ENCODE measurements at regions of chr7 and their contacts with region 1.

Region 1: DNA sequence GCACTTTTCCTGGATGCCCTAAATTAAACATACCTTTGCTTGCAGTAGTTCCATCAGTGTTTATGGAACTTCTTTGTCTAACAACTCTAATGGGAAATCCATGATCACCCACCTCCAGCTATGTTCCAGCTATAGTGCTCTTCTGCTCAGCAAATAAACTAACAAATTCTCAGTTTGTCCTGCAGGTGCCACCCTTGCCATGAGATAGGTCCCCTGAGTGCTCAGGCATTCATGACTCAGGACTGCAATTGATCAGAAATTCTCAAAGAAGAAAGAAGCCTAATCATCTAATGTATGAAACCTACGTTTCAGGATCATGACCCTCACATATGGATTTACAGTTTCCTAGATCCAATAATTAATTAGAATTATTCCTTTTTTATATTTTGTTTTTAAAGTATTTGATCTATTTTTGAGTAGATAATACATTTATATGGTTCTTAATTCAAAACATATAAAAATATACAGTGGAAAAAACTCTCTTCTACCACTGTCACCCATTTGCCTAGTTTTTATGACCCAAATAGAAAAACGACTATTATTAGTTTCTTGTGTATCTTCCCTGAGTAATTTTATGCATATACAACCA is 48.7 kb upstream of the DYNC1I1 start:
- DNase-seq: no peak
- H3K4me3 ChIP-seq: no peak overlapping the region
- H3K27ac ChIP-seq: no peak overlapping the region
- H3K4me1 ChIP-seq: no peaks in the 10 kb centered on the region
- H3K27me3 ChIP-seq: no peaks in the 10 kb centered on the region
- CTCF ChIP-seq: peak; percentile 63

Region 2: GRCh38 chr7:95871078-95871782 is 147.5 kb after region 1 on chr7:
- intact Hi-C with region 1: loop called (anchors 5 kb)
- DNase-seq: no peak
- H3K4me3 ChIP-seq: no peak overlapping the region
- H3K27ac ChIP-seq: no peak overlapping the region
- H3K4me1 ChIP-seq: peaks cover 18% of the 10 kb centered on the region
- H3K27me3 ChIP-seq: no peaks in the 10 kb centered on the region
- CTCF ChIP-seq: peak; percentile 71